ENCODE measurements at regions of chr2 and their contacts with region 1.

Region 1: DNA sequence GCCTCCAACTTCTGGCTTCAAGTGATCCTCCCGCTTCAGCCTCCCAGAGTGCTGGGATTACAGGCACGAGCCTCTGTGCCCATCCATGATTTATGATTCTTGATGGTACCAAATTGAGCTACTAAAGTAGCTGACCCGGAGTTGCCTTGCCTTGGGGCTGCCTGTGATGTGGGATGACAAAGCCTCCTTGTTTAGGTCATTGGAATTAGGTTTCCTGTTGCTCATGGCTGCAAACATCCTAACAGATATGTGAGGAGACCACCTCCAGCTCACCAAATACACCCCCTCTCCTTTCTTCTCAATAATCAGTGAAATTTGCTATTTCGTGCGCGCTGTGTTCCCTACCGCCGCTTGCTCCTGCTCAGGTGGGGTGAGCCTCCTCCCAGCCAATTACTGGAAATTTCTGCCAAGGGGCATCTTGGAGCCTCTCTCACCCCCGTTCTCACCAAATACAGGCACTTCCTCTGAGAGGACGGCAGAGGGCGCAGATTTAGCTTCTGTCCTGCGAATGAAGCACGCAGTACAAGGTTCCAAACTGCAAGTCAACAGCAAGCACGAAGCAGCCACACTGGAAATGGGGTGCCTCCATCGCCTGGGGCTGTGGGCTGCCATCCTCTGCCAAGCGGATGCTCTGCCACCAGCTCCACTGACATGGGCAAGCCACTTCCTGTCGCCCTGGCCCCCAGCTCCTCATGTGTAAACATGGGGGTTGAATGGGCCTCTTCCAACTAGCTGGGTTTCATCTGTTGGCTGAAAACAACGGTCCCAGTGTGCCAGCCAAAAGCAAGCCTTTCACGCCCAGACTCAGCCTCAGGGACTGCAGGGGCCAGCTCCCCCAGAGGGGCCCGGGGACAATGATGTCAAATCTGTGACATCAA is 71.7 kb downstream of the NCAPH start:
- DNase-seq: peak in 1 of 2 donors; percentile 74
- H3K4me3 ChIP-seq: no peak overlapping the region
- H3K27ac ChIP-seq: no peak overlapping the region
- H3K4me1 ChIP-seq: peaks cover 5 to 32% of the 10 kb centered on the region in 2 donors
- H3K27me3 ChIP-seq: no peaks in the 10 kb centered on the region
- CTCF ChIP-seq: peak; percentile 69 to 84 (median 71)

Region 2: GRCh38 chr2:96325041-96325883 is 82.0 kb before region 1 on chr2 and contains the start of gene ITPRIPL1:
- intact Hi-C with region 1: loop called (anchors 5 kb)
- DNase-seq: peak in 1 of 2 donors; percentile 60
- H3K4me3 ChIP-seq: peak within 1 kb of the TSS; percentile 56 to 72
- H3K27ac ChIP-seq: peak within 1 kb of the TSS; percentile 15 to 20
- H3K4me1 ChIP-seq: peaks cover 0 to 10% of the 10 kb centered on the region in 2 donors
- H3K27me3 ChIP-seq: no peaks in the 10 kb centered on the region
- CTCF ChIP-seq: no peak
- total RNA-seq, gene ITPRIPL1: 14.5 TPM

Region 3: GRCh38 chr2:96470636-96471035 is 63.4 kb after region 1 on chr2:
- intact Hi-C with region 1: loop called (anchors 5 kb)
- DNase-seq: peak in 1 of 2 donors; percentile 72
- H3K4me3 ChIP-seq: peak overlapping the region; percentile 43 to 61
- H3K27ac ChIP-seq: no peak overlapping the region
- H3K4me1 ChIP-seq: peaks cover 0 to 7% of the 10 kb centered on the region in 2 donors
- H3K27me3 ChIP-seq: no peaks in the 10 kb centered on the region
- CTCF ChIP-seq: peak; percentile 54 to 69 (median 61)

Region 4: GRCh38 chr2:96498023-96498431 is 90.7 kb after region 1 on chr2:
- intact Hi-C with region 1: no loop called
- DNase-seq: no peak
- H3K4me3 ChIP-seq: no peak overlapping the region
- H3K27ac ChIP-seq: no peak overlapping the region
- H3K4me1 ChIP-seq: no peaks in the 10 kb centered on the region
- H3K27me3 ChIP-seq: no peaks in the 10 kb centered on the region
- CTCF ChIP-seq: no peak

Region 5: GRCh38 chr2:96527286-96528005 is 120.2 kb after region 1 on chr2:
- intact Hi-C with region 1: no loop called
- DNase-seq: peak in 1 of 2 donors; percentile 86
- H3K4me3 ChIP-seq: peak overlapping the region; percentile 68 to 69
- H3K27ac ChIP-seq: peak overlapping the region; percentile 96 to 99
- H3K4me1 ChIP-seq: peaks cover 30 to 50% of the 10 kb centered on the region in 2 donors
- H3K27me3 ChIP-seq: no peaks in the 10 kb centered on the region
- CTCF ChIP-seq: peak in 2 of 3 experiments; percentile 49 to 56

Region 6: DNA sequence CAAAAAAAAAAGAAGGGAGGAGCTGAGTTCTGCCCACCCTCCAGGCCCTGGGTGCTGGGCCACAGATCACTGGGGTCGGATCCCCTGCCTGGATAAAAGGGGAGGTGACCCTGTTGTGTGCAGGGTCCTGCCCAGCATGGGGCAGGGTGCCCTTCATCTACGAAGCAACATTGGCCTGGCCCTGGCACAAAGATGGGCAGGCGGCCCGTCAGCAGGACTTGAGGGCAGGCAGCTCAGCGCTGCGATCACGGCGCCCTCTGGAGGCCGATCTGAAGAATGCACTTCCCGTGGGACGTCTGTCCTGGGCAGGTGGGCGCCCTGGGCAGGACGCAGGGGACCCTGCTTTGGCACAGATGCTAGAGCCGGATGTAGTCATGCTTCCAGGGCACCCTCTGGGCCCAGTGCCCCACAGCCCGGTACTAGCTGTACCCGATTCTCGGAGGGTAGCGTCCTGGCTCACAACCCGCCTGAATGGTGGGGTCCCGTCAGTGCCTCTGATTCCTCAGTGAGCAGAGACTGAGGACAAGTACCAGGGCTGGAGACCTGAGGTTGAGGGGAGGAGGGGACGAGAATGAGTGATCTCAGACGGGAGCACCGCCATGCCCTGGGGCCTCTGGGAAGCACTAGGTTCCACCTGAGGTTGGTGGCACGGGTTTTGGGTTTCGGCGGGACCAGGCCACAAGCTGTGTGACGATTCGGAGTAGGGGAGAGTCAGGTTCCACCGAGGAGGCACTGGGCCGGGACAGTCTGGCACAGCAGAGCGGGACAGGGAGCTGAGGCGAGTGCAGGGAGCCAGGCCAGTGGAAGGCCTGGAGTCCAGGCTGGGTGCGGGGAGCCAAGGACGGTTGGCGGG is 147.2 kb after region 1 on chr2:
- intact Hi-C with region 1: loop called (anchors 2 kb)
- DNase-seq: peak in 1 of 2 donors; percentile 89
- H3K4me3 ChIP-seq: peak overlapping the region in 1 of 2 donors; percentile 43
- H3K27ac ChIP-seq: peak overlapping the region in 1 of 2 donors; percentile 20
- H3K4me1 ChIP-seq: peaks cover 0 to 3% of the 10 kb centered on the region in 2 donors
- H3K27me3 ChIP-seq: no peaks in the 10 kb centered on the region
- CTCF ChIP-seq: peak; percentile 96 to 98 (median 98)

Measured in ascending aorta (tissue), 2 donors.